ENCODE measurements at regions of chr1 and their contacts with region 1.

Region 1: GRCh38 chr1:95233737-95234500 is at the start of gene RWDD3:
- DNase-seq: peak; percentile 93
- ATAC-seq: peak; percentile 98
- H3K4me3 Mint-ChIP-seq: peak within 1 kb of the TSS; percentile 91
- H3K27ac Mint-ChIP-seq: peak within 1 kb of the TSS; percentile 93
- H3K4me1 Mint-ChIP-seq: peaks cover 26% of the 10 kb centered on the region
- H3K27me3 Mint-ChIP-seq: peaks cover 17% of the 10 kb centered on the region
- total RNA-seq, gene RWDD3: 16.8 to 17.1 TPM

Region 2: GRCh38 chr1:95072532-95073419 is 161.1 kb before region 1 on chr1 and contains the start of gene ALG14:
- CTCF ChIA-PET with region 1: interaction called, 10 read pairs
- POLR2A ChIA-PET with region 1: interaction called, 9 read pairs
- DNase-seq: peak; percentile 95
- ATAC-seq: peak; percentile 98
- H3K4me3 Mint-ChIP-seq: peak within 1 kb of the TSS; percentile 96
- H3K27ac Mint-ChIP-seq: peak within 1 kb of the TSS; percentile 95
- H3K4me1 Mint-ChIP-seq: peaks cover 14% of the 10 kb centered on the region
- H3K27me3 Mint-ChIP-seq: no peaks in the 10 kb centered on the region
- total RNA-seq, gene ALG14: 2.7 to 5.8 TPM

Region 3: GRCh38 chr1:95084317-95085176 is 149.4 kb before region 1 on chr1:
- CTCF ChIA-PET with region 1: interaction called, 18 read pairs
- POLR2A ChIA-PET with region 1: interaction called, 3 read pairs
- DNase-seq: peak; percentile 29
- ATAC-seq: peak; percentile 51
- H3K4me3 Mint-ChIP-seq: no peak overlapping the region
- H3K27ac Mint-ChIP-seq: no peak overlapping the region
- H3K4me1 Mint-ChIP-seq: peaks cover 4% of the 10 kb centered on the region
- H3K27me3 Mint-ChIP-seq: peaks cover 10% of the 10 kb centered on the region

Region 4: GRCh38 chr1:95223110-95223509 is 10.8 kb before region 1 on chr1:
- CTCF ChIA-PET with region 1: interaction called, 21 read pairs
- POLR2A ChIA-PET with region 1: interaction called, 3 read pairs
- DNase-seq: no peak
- ATAC-seq: no peak
- H3K4me3 Mint-ChIP-seq: no peak overlapping the region
- H3K27ac Mint-ChIP-seq: no peak overlapping the region
- H3K4me1 Mint-ChIP-seq: no peaks in the 10 kb centered on the region
- H3K27me3 Mint-ChIP-seq: peaks cover 14% of the 10 kb centered on the region

Region 5: GRCh38 chr1:95246511-95246910 is 12.6 kb after region 1 on chr1:
- CTCF ChIA-PET with region 1: interaction called, 20 read pairs
- POLR2A ChIA-PET with region 1: interaction called, 7 read pairs
- DNase-seq: no peak
- ATAC-seq: no peak
- H3K4me3 Mint-ChIP-seq: no peak overlapping the region
- H3K27ac Mint-ChIP-seq: no peak overlapping the region
- H3K4me1 Mint-ChIP-seq: no peaks in the 10 kb centered on the region
- H3K27me3 Mint-ChIP-seq: no peaks in the 10 kb centered on the region

Region 6: DNA sequence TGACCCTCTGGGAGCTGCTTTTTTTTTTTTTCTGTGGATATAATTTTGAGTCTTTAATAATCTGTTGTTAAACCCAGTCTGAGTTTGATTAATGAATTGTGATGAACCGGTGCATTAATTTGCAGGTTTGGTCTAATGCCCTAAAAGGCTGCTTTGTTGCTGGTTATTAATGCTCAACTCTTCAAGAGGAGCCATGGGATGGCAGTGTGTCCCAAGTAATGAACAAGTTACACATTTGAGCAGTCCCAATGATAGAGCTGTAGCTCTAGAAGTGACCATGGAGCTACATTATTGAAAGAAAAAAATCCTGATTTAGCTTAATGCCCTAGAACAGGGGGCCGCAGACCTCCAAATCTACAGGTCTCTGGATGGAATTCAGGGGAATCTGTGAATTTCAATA is 53.2 kb after region 1 on chr1:
- CTCF ChIA-PET with region 1: no interaction called
- POLR2A ChIA-PET with region 1: no interaction called
- DNase-seq: no peak
- ATAC-seq: no peak
- H3K4me3 Mint-ChIP-seq: no peak overlapping the region
- H3K27ac Mint-ChIP-seq: no peak overlapping the region
- H3K4me1 Mint-ChIP-seq: no peaks in the 10 kb centered on the region
- H3K27me3 Mint-ChIP-seq: no peaks in the 10 kb centered on the region

Region 7: DNA sequence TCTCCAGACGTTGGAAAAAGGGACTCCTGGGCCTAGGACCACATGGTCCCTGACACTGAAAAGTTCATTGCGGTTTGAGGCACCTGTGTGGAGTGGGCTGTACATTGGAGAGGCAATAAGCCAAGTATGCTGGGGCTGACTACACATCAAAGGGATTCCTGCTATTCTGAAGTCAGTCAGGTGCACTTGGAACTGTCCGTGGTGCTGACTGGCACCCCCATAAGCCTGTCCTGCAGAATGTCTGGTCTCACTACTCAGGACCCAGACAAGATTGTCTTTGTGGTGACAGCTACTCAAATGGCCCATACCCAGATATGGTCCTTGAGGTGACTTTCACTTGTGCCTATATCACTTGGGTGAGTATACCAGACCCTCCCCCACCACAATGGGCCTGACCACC is 150.6 kb after region 1 on chr1:
- CTCF ChIA-PET with region 1: no interaction called
- POLR2A ChIA-PET with region 1: no interaction called
- DNase-seq: peak; percentile 54
- ATAC-seq: peak; percentile 68
- H3K4me3 Mint-ChIP-seq: no peak overlapping the region
- H3K27ac Mint-ChIP-seq: no peak overlapping the region
- H3K4me1 Mint-ChIP-seq: no peaks in the 10 kb centered on the region
- H3K27me3 Mint-ChIP-seq: no peaks in the 10 kb centered on the region

Measured in activated CD8-positive, alpha-beta T cell treated with anti-CD3 and anti-CD28 coated beads, Interleukin-2, amount 10 ng/mL, durations not matched to agents 7 days and 5 days (primary cell).